ENCODE measurements at regions of chr5 and their contacts with region 1.

Region 1: DNA sequence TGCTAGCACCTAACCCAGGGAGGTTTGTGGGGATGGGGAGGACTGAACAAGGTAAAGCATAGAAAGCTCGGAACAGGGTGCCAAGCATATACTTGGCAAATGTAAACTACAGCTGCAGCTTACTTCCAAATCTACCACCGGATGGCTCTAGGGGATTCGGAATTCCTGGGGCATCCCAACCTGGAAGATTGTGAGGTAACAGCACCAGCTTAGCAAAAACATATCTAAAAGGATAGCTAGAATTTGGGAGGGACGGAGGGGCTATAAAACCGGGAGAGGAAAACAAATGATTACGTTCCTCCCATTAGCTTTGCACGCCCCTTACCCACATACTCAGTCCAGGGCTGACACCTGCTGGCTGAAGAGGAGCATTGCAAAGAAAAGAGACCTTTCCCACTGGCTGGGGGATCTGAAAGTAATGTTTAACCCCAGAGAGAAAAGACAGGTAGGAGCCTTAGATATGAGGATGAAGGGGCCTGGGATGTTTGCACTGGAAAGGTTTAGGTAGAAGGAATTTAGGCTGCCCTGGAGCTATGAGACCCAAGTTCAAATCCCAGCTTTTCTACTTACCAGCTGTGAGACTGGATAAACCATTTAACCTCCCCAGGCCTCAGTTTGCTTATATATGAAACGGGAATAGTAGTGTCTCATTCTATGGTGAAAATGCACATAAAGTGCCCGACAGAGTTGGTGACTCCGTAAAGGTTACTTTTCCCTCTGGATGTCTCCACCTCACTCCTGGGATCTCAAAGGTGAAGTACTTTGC is 73.6 kb downstream of the FAM114A2 start:
- DNase-seq: peak; percentile 59 to 83
- ATAC-seq: peak; percentile 75 to 93
- H3K4me3 ChIP-seq: no peak overlapping the region
- H3K27ac ChIP-seq: no peak overlapping the region
- H3K4me1 ChIP-seq: no peaks in the 10 kb centered on the region
- CTCF ChIP-seq: peak; percentile 95
- EP300 ChIP-seq: no peak
- POLR2A ChIP-seq: no peak
- RAD21 ChIP-seq: peak; percentile 96 to 97

Region 2: GRCh38 chr5:152527358-152528052 is 1437.6 kb before region 1 on chr5:
- CTCF ChIA-PET with region 1: interaction called, 102 read pairs
- POLR2A ChIA-PET with region 1: no interaction called
- DNase-seq: no peak
- ATAC-seq: no peak
- H3K4me3 ChIP-seq: no peak overlapping the region
- H3K27ac ChIP-seq: no peak overlapping the region
- H3K4me1 ChIP-seq: no peaks in the 10 kb centered on the region
- CTCF ChIP-seq: no peak
- EP300 ChIP-seq: no peak
- POLR2A ChIP-seq: no peak
- RAD21 ChIP-seq: no peak

Region 3: DNA sequence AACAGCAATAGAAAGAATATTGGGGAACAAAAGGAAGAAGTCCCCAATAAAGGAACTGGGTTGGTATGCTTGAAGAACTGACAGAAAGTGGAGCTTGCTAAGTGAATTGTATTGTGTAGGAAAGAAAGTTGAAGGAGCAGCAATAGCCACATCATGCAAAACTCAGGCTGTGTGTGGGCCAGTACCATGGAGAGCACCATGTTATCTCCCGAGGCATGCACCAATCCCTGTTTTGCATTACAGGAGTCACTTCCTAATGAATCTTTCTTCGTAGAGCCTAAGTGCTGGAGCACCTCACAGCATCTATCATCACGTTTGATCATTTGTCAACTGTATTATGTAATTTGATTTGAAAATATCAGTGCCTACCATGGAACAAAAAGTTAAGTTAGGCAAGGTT is 1422.3 kb before region 1 on chr5:
- CTCF ChIA-PET with region 1: interaction called, 13 read pairs
- POLR2A ChIA-PET with region 1: no interaction called
- DNase-seq: no peak
- ATAC-seq: no peak
- H3K4me3 ChIP-seq: no peak overlapping the region
- H3K27ac ChIP-seq: no peak overlapping the region
- H3K4me1 ChIP-seq: no peaks in the 10 kb centered on the region
- CTCF ChIP-seq: no peak
- EP300 ChIP-seq: no peak
- POLR2A ChIP-seq: no peak
- RAD21 ChIP-seq: no peak

Region 4: GRCh38 chr5:153447534-153447933 is 517.5 kb before region 1 on chr5:
- CTCF ChIA-PET with region 1: interaction called, 11 read pairs
- POLR2A ChIA-PET with region 1: no interaction called
- DNase-seq: no peak
- ATAC-seq: no peak
- H3K4me3 ChIP-seq: no peak overlapping the region
- H3K27ac ChIP-seq: no peak overlapping the region
- H3K4me1 ChIP-seq: no peaks in the 10 kb centered on the region
- CTCF ChIP-seq: no peak
- EP300 ChIP-seq: no peak
- POLR2A ChIP-seq: no peak
- RAD21 ChIP-seq: no peak

Region 5: DNA sequence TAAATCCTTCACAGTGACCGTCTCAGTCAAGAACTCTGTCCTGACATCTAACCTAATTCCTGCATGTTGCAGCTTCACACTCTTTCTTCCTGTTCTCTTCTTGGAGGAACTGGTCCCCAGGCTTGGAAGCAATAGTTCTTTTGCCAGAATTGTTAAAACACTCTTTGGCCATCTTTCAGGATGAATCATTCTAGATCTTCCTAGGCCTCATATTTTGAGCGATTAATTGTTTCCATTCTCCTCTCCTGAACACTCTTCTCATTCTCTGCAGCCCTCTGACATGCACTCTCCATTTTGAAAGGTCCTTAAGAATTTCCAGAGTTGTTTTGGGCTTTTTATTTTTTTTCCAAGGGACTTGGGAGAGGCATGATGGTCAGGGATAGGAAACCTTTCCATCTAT is 12.2 kb before region 1 on chr5:
- CTCF ChIA-PET with region 1: interaction called, 21 read pairs
- POLR2A ChIA-PET with region 1: no interaction called
- DNase-seq: no peak
- ATAC-seq: no peak
- H3K4me3 ChIP-seq: no peak overlapping the region
- H3K27ac ChIP-seq: no peak overlapping the region
- H3K4me1 ChIP-seq: no peaks in the 10 kb centered on the region
- CTCF ChIP-seq: no peak
- EP300 ChIP-seq: no peak
- POLR2A ChIP-seq: no peak
- RAD21 ChIP-seq: no peak

Region 6: DNA sequence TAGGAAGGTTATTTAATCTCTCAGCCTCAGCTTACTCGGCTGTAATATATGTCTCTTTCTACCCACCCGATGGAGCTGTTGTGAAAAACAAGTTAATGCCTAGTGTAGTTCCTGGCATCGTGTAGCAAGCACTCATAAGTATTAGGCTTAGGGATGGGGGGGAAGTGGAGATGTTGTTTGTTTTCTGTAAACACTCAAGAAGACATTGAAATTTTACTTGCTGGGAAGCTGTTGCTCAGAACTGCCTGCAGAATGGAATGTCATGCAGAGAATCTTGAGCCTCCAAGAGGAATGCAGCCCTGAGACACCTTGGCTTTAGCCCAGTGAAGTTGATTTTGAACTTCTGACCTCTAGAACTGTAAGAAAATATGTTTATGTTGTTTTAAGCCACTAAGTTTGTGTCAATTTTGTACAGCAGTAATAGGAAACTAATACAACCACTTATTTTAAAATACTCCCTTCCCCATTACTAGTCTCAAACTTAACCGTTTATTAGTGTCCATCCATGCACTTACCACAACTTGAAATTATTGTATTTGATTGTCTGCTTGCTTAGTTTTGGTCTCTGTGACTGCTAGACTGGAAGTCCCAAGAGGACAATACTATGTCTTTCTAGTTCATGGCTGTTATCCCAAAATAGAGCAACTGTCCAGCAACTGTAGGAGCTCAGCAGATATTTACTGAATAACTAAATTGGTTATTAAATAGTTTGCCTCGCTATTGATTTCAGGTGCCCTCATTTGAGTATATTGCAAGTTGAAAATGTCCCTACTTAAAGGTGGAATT is 127.5 kb after region 1 on chr5:
- CTCF ChIA-PET with region 1: no interaction called
- POLR2A ChIA-PET with region 1: no interaction called
- DNase-seq: peak in 1 of 2 experiments; percentile 30
- ATAC-seq: peak in 1 of 2 experiments; percentile 70; a peak in 4 of 6 replicates
- H3K4me3 ChIP-seq: no peak overlapping the region
- H3K27ac ChIP-seq: no peak overlapping the region
- H3K4me1 ChIP-seq: peaks cover 8% of the 10 kb centered on the region
- CTCF ChIP-seq: no peak
- EP300 ChIP-seq: no peak
- POLR2A ChIP-seq: no peak
- RAD21 ChIP-seq: no peak